Tibial artery (tissue), 4 donors: ENCODE measurements at regions of chr5 and their contacts with region 1.

Region 1: GRCh38 chr5:82641331-82642003 is 363.3 kb upstream of the RPS23 start:
- DNase-seq: peak; percentile 83 to 88
- H3K4me3 ChIP-seq: no peak overlapping the region
- H3K27ac ChIP-seq: peak overlapping the region; percentile 64 to 68
- H3K4me1 ChIP-seq: peaks cover 0 to 29% (median 16%) of the 10 kb centered on the region in 4 donors
- H3K27me3 ChIP-seq: no peaks in the 10 kb centered on the region
- CTCF ChIP-seq: peak; percentile 75 to 82

Region 2: GRCh38 chr5:82664732-82665131 is 23.3 kb after region 1 on chr5:
- intact Hi-C with region 1: no loop called
- DNase-seq: no peak
- H3K4me3 ChIP-seq: no peak overlapping the region
- H3K27ac ChIP-seq: no peak overlapping the region
- H3K4me1 ChIP-seq: no peaks in the 10 kb centered on the region
- H3K27me3 ChIP-seq: no peaks in the 10 kb centered on the region
- CTCF ChIP-seq: no peak

Region 3: DNA sequence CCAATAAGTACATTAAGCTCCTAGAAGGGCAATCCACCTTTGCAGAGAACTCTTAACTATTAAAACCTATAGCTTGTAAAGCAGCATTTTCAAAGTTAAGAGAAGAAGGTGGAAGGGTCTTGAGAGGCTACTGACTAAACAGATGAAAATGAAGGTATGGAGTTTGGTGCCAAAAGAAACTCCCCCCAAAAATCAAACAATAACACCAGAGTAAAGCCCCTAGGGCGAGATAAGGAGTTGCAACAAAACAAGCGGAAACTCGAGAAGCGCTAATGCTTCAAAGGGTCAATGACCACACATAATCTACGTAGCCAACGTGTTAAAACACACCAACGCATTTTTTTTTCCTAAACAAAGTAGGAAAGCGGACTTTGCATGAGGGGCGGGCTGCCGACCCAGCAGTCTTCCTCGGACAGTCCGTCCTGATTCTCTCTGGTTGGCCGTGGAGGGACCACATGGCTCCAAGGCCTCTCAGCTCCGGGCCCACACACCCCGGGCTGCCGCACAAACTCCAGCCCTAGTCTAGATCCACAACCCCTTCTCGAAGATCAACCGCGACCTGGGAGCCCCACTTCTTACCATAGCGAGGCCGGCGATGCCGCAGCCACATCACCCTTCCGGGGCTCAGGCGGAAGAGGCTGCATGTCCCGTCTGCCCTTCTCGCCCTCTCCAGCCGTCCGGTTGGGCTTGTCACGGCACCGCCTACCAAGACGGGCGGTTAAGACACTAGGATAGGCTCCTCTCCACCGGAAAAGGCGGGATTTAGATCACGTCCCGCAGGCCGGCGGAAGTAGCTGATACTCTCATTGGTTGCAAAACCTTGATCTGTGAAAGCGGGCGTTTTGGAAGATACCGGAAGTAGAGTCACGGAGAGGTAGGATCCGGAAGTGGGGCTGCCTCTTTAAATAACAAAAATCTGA is 435.5 kb after region 1 on chr5 and contains the starts of genes TMEM167A and XRCC4:
- intact Hi-C with region 1: loop called (anchors 5 kb)
- DNase-seq: peak; percentile 97 to 98
- H3K4me3 ChIP-seq: peak within 1 kb of the TSS; percentile 86 to 95
- H3K27ac ChIP-seq: peak within 1 kb of the TSS; percentile 82 to 89
- H3K4me1 ChIP-seq: peaks cover 0 to 52% (median 22%) of the 10 kb centered on the region in 4 donors
- H3K27me3 ChIP-seq: no peaks in the 10 kb centered on the region
- CTCF ChIP-seq: no peak